ENCODE measurements at regions of chr20 and their contacts with region 1.

Region 1: DNA sequence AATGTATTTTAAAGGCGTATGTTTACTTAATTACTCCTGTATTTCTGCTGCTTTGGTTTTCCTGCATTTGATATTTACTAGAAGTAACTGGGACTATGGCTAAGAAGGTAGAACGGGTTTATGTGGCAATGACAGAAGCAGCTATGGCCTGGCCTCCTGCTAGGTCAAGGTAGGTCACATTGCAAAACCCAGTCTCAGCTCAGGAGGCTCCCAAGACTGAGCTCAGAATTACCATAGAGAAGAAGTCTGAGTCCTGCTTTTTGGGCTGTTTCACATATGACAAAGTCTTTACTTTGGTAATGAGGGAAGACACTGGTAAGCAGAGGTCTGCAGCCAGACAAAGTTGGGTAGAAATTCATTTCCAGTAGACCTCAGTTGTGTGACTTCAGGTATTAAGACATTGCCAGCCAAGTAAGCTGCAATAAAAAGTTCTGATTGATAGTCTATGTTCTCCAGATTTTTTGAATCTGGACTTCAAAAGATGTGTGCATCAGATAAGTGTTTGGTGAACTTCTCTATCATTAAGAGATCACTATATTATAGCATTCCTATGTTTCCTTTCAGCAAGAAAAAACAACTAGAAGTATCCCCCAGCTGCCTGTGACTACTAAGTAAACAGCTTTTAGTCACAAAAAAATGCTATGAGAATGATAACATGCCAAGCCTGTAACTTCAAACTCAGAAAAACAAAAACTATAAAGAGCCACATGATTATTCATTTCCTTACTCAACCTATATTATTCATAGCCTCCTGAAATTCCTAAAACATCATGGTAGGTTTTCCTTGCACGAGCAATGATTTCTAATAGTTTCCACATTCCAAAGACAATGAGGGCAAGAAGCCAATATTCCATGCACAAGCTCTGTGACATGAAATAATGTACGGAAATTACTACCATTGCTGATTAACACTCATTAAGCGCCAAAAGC is 312.3 kb downstream of the HAO1 start:
- DNase-seq: peak; percentile 99
- H3K4me3 ChIP-seq: no peak overlapping the region
- H3K27ac ChIP-seq: peak overlapping the region; percentile 97
- H3K4me1 ChIP-seq: peaks cover 28% of the 10 kb centered on the region
- H3K27me3 ChIP-seq: no peaks in the 10 kb centered on the region
- CTCF ChIP-seq: no peak
- POLR2A ChIP-seq: no peak

Region 2: GRCh38 chr20:7123457-7123856 is 504.5 kb before region 1 on chr20:
- CTCF ChIA-PET with region 1: no interaction called
- POLR2A ChIA-PET with region 1: no interaction called
- dilution Hi-C with region 1: no loop called
- intact Hi-C with region 1: no loop called
- DNase-seq: no peak
- H3K4me3 ChIP-seq: no peak overlapping the region
- H3K27ac ChIP-seq: no peak overlapping the region
- H3K4me1 ChIP-seq: no peaks in the 10 kb centered on the region
- H3K27me3 ChIP-seq: no peaks in the 10 kb centered on the region
- CTCF ChIP-seq: no peak
- POLR2A ChIP-seq: no peak

Region 3: GRCh38 chr20:7195704-7196103 is 432.3 kb before region 1 on chr20:
- CTCF ChIA-PET with region 1: no interaction called
- POLR2A ChIA-PET with region 1: no interaction called
- dilution Hi-C with region 1: no loop called
- intact Hi-C with region 1: no loop called
- DNase-seq: peak; percentile 83
- H3K4me3 ChIP-seq: no peak overlapping the region
- H3K27ac ChIP-seq: no peak overlapping the region
- H3K4me1 ChIP-seq: peaks cover 6% of the 10 kb centered on the region
- H3K27me3 ChIP-seq: no peaks in the 10 kb centered on the region
- CTCF ChIP-seq: no peak
- POLR2A ChIP-seq: no peak

Region 4: DNA sequence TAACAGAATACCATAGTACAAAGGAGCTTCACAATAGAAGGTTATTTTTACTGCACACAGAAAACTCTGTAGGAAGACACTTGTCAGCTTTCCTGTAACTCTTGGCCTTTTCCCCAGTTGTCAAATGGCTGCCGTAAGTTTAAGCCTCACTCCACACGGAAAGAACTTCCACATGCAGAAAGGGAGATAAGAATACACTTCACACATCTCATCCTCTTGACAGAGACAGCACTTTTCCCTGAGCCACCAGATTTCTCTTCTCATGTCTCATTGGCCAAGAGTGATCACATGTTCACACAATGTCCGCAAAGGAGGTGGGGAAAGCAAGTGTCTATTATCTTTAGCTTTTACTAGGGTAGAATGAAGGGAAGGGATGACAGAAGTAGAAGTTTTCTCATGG is 228.4 kb before region 1 on chr20:
- CTCF ChIA-PET with region 1: no interaction called
- POLR2A ChIA-PET with region 1: no interaction called
- dilution Hi-C with region 1: no loop called
- intact Hi-C with region 1: loop called (anchors 1 kb)
- DNase-seq: peak; percentile 79
- H3K4me3 ChIP-seq: no peak overlapping the region
- H3K27ac ChIP-seq: peak overlapping the region; percentile 59
- H3K4me1 ChIP-seq: peaks cover 15% of the 10 kb centered on the region
- H3K27me3 ChIP-seq: peaks cover 0 to 2% of the 10 kb centered on the region in 2 experiments
- CTCF ChIP-seq: no peak
- POLR2A ChIP-seq: no peak

Region 5: DNA sequence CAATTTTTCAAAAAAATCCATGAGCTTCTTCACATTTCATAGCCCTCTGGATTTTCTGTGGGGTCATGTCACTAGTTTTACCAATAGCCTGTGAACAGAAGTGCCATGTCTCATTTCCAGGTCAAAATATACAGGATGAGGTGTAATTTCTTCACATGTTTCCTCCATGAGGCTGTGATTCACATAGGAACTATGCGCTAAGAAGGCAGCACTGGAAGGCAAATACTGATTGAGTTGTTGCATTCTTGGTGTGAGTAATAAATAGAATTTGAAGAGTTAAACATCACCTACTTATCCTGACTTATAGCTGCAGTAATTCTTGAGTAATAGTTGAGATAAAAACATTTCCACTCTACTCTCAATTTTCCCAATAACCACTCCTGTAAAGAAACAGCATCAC is 130.0 kb before region 1 on chr20:
- CTCF ChIA-PET with region 1: no interaction called
- POLR2A ChIA-PET with region 1: no interaction called
- dilution Hi-C with region 1: no loop called
- intact Hi-C with region 1: loop called (anchors 1 kb)
- DNase-seq: peak; percentile 94
- H3K4me3 ChIP-seq: no peak overlapping the region
- H3K27ac ChIP-seq: peak overlapping the region; percentile 69
- H3K4me1 ChIP-seq: peaks cover 25% of the 10 kb centered on the region
- H3K27me3 ChIP-seq: no peaks in the 10 kb centered on the region
- CTCF ChIP-seq: no peak
- POLR2A ChIP-seq: peak; percentile 26

Region 6: DNA sequence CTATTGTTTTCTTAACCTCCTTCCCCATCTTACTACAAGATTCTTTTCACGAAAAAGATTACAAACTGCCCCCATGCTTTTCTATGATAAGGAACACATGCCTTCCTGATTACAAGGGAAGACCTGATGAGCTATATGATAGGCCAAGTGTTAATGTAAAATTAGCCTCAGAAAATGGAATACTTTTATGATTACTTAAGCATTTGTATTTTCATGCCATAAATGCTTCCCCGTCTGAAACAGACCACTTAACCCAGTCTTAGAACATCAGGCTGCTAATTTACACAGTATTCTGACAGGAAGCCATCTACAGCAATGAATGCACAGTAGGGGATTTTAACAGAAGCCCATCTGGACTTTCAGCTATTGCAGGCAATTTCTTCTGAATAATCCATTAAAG is 37.4 kb after region 1 on chr20:
- CTCF ChIA-PET with region 1: no interaction called
- POLR2A ChIA-PET with region 1: interaction called, 5 read pairs
- dilution Hi-C with region 1: no loop called
- intact Hi-C with region 1: loop called (anchors 2 kb)
- DNase-seq: peak; percentile 50
- H3K4me3 ChIP-seq: no peak overlapping the region
- H3K27ac ChIP-seq: no peak overlapping the region
- H3K4me1 ChIP-seq: peaks cover 22% of the 10 kb centered on the region
- H3K27me3 ChIP-seq: no peaks in the 10 kb centered on the region
- CTCF ChIP-seq: no peak
- POLR2A ChIP-seq: no peak

Region 7: GRCh38 chr20:7742479-7742878 is 114.5 kb after region 1 on chr20:
- CTCF ChIA-PET with region 1: no interaction called
- POLR2A ChIA-PET with region 1: no interaction called
- dilution Hi-C with region 1: no loop called
- intact Hi-C with region 1: loop called (anchors 1 kb)
- DNase-seq: peak; percentile 79
- H3K4me3 ChIP-seq: no peak overlapping the region
- H3K27ac ChIP-seq: no peak overlapping the region
- H3K4me1 ChIP-seq: peaks cover 9% of the 10 kb centered on the region
- H3K27me3 ChIP-seq: no peaks in the 10 kb centered on the region
- CTCF ChIP-seq: no peak
- POLR2A ChIP-seq: no peak

Region 8: GRCh38 chr20:7841971-7842310 is 213.9 kb after region 1 on chr20:
- CTCF ChIA-PET with region 1: interaction called, 3 read pairs
- POLR2A ChIA-PET with region 1: no interaction called
- dilution Hi-C with region 1: no loop called
- intact Hi-C with region 1: loop called (anchors 1 kb)
- DNase-seq: peak; percentile 93
- H3K4me3 ChIP-seq: no peak overlapping the region
- H3K27ac ChIP-seq: peak overlapping the region; percentile 89
- H3K4me1 ChIP-seq: peaks cover 24% of the 10 kb centered on the region
- H3K27me3 ChIP-seq: no peaks in the 10 kb centered on the region
- CTCF ChIP-seq: no peak
- POLR2A ChIP-seq: no peak

Measured in endothelial cell of umbilical vein (primary cell).